ENCODE measurements at regions of chr19 and their contacts with region 1.

Region 1: DNA sequence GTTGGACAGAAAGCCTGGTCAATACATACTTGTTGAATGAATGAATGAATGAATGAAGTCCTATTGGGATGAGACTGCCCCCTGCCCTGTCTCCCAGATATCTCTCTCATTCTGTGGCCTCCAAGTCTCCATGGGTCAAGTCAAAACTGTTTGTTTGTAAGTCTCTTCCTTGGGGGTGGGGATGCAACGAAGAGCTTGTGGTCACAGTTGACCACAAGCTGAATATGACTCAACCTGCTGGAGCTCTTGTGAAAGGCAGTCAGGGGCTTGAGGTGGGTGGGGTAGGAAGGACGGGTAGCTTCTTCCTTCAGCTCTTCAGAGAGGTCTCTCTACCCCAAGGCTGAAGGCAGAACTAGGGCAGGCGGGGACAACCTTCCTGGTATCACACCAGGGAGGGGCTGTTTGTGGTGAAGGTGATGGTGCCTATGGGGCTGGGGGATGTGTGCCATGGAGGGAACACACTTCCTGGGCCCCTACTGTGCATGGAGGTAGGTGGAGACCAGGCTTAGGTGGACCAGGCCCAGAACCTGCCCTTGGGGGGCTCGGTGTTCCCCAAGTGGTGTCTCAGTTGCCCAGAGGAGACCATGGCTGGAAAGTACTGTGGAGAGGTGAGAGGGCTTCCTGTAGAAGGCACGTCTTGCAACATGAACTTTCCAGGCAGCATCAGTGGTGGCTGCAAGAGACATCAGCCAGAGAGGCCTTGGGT is 8.0 kb downstream of the MYO1F start:
- DNase-seq: peak; percentile 96
- ATAC-seq: peak; percentile 83
- H3K4me3 ChIP-seq: no peak overlapping the region
- H3K27ac ChIP-seq: peak overlapping the region; percentile 63
- H3K4me1 ChIP-seq: peaks cover 12% of the 10 kb centered on the region
- H3K27me3 ChIP-seq: no peaks in the 10 kb centered on the region
- CTCF ChIP-seq: no peak; the same call in 1 of the 2 replicates
- POLR2A ChIP-seq: no peak
- RAD21 ChIP-seq: 0 out of 2 replicates have a peak, but pooled peaks have one; percentile 14

Region 2: DNA sequence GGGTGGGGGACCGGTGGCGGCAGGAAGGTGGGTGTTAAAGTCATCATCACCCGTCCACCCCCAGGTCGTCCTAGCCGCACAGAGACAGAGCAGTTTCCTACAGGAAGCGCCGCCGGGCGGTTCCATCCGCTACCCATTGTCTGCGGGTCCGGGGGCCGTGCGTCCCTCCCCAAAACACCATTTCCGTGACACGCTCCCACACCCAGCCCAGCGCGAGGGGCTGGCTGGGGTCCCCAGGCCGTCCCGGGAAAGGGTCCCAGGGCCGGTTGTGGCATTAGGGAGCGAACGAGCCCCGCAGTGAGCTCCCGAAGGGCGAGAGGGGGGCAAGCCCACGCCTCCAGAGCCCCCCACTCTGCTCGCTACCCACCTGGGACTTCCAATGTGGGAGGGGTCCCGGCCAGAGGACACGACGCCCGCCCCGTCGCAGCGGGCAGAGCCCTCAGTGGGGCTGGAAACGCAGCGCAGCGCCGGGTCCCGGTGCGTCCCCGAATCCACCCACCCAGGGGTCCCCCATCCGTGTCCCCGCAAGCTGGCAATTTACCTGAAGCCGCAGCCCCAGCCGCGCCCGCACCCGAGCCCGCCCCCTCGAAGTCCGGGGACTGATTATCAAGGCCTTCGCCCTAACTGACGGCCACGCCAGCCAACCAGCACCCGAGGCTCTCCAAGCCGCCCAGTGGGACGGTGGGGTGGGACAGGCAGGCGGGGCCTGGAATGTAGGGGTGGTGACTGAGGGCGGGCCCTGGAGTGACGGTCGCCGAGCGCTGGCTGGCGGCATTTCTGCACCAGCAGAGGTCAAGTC is 226.3 kb before region 1 on chr19 and contains the start of gene KANK3:
- CTCF ChIA-PET with region 1: no interaction called
- POLR2A ChIA-PET with region 1: no interaction called
- dilution Hi-C with region 1: no loop called
- in situ Hi-C with region 1: loop called (anchors 5 kb)
- intact Hi-C with region 1: no loop called
- DNase-seq: peak; percentile 90
- ATAC-seq: peak; percentile 100
- H3K4me3 ChIP-seq: peak within 1 kb of the TSS; percentile 44
- H3K27ac ChIP-seq: no peak within 1 kb of the TSS
- H3K4me1 ChIP-seq: peaks cover 4% of the 10 kb centered on the region; the same call in 1 of the 2 replicates
- H3K27me3 ChIP-seq: peaks cover 12% of the 10 kb centered on the region; the same call in 1 of the 2 replicates
- CTCF ChIP-seq: no peak
- POLR2A ChIP-seq: no peak
- RAD21 ChIP-seq: no peak
- total RNA-seq, gene KANK3: not detected in 2 replicates

Region 3: GRCh38 chr19:8473648-8474476 is 95.4 kb before region 1 on chr19:
- CTCF ChIA-PET with region 1: interaction called, 4 read pairs
- POLR2A ChIA-PET with region 1: no interaction called
- dilution Hi-C with region 1: no loop called
- in situ Hi-C with region 1: no loop called
- intact Hi-C with region 1: loop called (anchors 5 kb)
- DNase-seq: no peak
- ATAC-seq: no peak
- H3K4me3 ChIP-seq: no peak overlapping the region
- H3K27ac ChIP-seq: no peak overlapping the region
- H3K4me1 ChIP-seq: peaks cover 7% of the 10 kb centered on the region
- H3K27me3 ChIP-seq: no peaks in the 10 kb centered on the region
- CTCF ChIP-seq: no peak
- POLR2A ChIP-seq: no peak
- RAD21 ChIP-seq: no peak

Region 4: GRCh38 chr19:8513687-8514504 is 55.3 kb before region 1 on chr19 and contains the start of gene ZNF414:
- CTCF ChIA-PET with region 1: no interaction called
- POLR2A ChIA-PET with region 1: no interaction called
- dilution Hi-C with region 1: no loop called
- in situ Hi-C with region 1: no loop called
- intact Hi-C with region 1: no loop called
- DNase-seq: peak; percentile 95
- ATAC-seq: peak; percentile 96
- H3K4me3 ChIP-seq: peak within 1 kb of the TSS; percentile 84
- H3K27ac ChIP-seq: peak within 1 kb of the TSS; percentile 98
- H3K4me1 ChIP-seq: peaks cover 11% of the 10 kb centered on the region
- H3K27me3 ChIP-seq: no peaks in the 10 kb centered on the region
- CTCF ChIP-seq: no peak
- POLR2A ChIP-seq: peak; percentile 86
- RAD21 ChIP-seq: no peak
- total RNA-seq, gene ZNF414: 1.1 and 3.2 TPM in 2 replicates

Region 5: DNA sequence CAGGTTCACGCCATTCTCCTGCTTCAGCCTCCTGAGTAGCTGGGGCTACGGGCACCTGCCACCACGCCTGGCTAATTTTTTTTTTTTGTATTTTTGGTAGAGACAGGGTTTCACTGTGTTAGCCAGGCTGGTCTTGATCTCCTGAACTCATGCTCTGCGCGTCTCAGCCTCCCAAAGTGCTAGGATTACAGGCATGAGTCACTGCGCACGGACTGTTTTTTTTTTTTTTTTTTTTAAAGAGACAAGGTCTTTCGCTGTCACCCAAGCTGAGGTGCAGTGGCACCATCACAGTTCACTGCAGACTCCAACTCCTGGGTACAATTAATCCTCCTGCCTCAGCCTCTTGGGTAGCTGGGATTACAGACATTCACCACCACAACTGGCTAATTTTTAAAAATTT is 49.5 kb after region 1 on chr19:
- CTCF ChIA-PET with region 1: no interaction called
- POLR2A ChIA-PET with region 1: no interaction called
- dilution Hi-C with region 1: no loop called
- in situ Hi-C with region 1: no loop called
- intact Hi-C with region 1: no loop called
- DNase-seq: no peak
- ATAC-seq: no peak
- H3K4me3 ChIP-seq: no peak overlapping the region
- H3K27ac ChIP-seq: no peak overlapping the region
- H3K4me1 ChIP-seq: peaks cover 2% of the 10 kb centered on the region; the same call in 1 of the 2 replicates
- H3K27me3 ChIP-seq: peaks cover 6% of the 10 kb centered on the region; the same call in 1 of the 2 replicates
- CTCF ChIP-seq: no peak
- POLR2A ChIP-seq: no peak
- RAD21 ChIP-seq: no peak

Region 6: GRCh38 chr19:8641908-8642547 is 72.8 kb after region 1 on chr19:
- CTCF ChIA-PET with region 1: no interaction called
- POLR2A ChIA-PET with region 1: no interaction called
- dilution Hi-C with region 1: no loop called
- in situ Hi-C with region 1: no loop called
- intact Hi-C with region 1: no loop called
- DNase-seq: peak; percentile 65
- ATAC-seq: peak; percentile 71
- H3K4me3 ChIP-seq: no peak overlapping the region
- H3K27ac ChIP-seq: no peak overlapping the region
- H3K4me1 ChIP-seq: peaks cover 6% of the 10 kb centered on the region
- H3K27me3 ChIP-seq: peaks cover 10% of the 10 kb centered on the region
- CTCF ChIP-seq: peak; percentile 64
- POLR2A ChIP-seq: no peak
- RAD21 ChIP-seq: peak; percentile 61

Region 7: DNA sequence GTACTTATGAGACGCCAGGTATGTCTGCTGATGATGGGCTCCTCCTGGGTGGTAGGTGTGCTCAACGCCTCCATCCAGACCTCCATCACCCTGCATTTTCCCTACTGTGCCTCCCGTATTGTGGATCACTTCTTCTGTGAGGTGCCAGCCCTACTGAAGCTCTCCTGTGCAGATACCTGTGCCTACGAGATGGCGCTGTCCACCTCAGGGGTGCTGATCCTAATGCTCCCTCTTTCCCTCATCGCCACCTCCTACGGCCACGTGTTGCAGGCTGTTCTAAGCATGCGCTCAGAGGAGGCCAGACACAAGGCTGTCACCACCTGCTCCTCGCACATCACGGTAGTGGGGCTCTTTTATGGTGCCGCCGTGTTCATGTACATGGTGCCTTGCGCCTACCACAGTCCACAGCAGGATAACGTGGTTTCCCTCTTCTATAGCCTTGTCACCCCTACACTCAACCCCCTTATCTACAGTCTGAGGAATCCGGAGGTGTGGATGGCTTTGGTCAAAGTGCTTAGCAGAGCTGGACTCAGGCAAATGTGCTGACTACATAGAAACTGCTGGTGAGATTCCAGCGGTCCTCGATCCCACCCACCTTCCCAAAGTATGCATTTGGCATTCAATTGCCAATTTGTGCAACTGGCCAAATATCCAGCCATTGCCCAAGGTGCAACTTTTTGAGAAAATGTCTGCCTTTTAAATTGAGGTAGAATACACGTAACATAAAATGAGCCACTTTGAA is 162.4 kb after region 1 on chr19:
- CTCF ChIA-PET with region 1: no interaction called
- POLR2A ChIA-PET with region 1: no interaction called
- dilution Hi-C with region 1: no loop called
- in situ Hi-C with region 1: no loop called
- intact Hi-C with region 1: no loop called
- DNase-seq: no peak
- ATAC-seq: no peak
- H3K4me3 ChIP-seq: no peak overlapping the region
- H3K27ac ChIP-seq: no peak overlapping the region
- H3K4me1 ChIP-seq: no peaks in the 10 kb centered on the region
- H3K27me3 ChIP-seq: no peaks in the 10 kb centered on the region
- CTCF ChIP-seq: no peak
- POLR2A ChIP-seq: no peak
- RAD21 ChIP-seq: no peak

Measured in IMR-90 (cell line).